Activated CD4-positive, alpha-beta T cell treated with anti-CD3 and anti-CD28 coated beads for 36 hours (primary cell): ENCODE measurements at regions of chr12 and their contacts with region 1.

Region 1: DNA sequence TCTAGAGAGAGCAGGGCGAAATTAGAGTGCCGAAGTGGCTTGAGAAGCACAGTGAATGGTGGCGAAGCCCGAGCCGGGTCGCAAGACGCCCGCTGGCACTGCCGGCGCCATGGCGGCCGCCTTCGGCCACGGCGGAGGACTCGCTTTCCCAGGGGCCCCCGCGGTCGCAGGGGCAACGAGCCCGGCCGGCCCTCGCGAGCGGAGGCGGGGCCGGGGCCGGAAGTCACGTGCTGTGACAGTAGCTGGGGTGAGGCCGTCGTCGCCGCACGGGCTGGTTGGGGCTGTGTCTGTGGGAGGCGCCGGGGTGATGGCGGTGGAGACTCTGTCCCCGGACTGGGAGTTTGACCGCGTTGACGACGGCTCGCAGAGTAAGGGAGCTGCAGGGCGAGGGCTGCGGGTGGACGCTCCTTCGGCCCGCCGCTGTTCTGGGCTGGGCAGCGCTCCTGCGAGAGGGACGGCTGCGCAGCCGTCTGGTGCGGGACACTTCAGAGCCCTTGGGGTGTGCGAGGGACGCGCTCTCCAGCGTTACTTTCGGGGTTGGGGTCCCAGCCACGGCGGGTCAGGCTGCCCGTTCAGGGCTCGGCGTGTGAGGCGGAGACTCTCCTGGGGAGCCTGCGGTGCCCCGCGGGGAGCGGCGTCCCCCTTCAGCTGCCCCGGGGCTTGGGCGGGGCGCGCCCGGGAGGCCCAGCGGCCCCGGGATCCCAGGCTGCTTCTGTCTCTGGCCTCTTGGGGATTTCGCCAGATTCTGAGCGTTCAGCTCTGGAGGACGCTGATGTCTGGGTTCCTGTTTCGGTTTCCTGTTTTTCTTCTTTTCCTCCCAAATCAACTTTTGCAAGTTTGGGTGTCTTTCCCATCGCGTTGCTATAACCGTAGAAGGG is at the start of gene WASHC4:
- DNase-seq: peak; percentile 97
- ATAC-seq: peak; percentile 96
- H3K4me3 Mint-ChIP-seq: peak within 1 kb of the TSS; percentile 93
- H3K27ac Mint-ChIP-seq: peak within 1 kb of the TSS; percentile 88
- H3K4me1 Mint-ChIP-seq: peaks cover 33% of the 10 kb centered on the region
- H3K27me3 Mint-ChIP-seq: peaks cover 13% of the 10 kb centered on the region
- total RNA-seq, gene WASHC4: 29.6 to 35.9 TPM

Region 2: GRCh38 chr12:103930034-103930786 is 1177.5 kb before region 1 on chr12 and contains the start of gene HSP90B1:
- CTCF ChIA-PET with region 1: no interaction called
- POLR2A ChIA-PET with region 1: no interaction called
- intact Hi-C with region 1: loop called in 1 of 2 experiments (anchors 2 kb)
- DNase-seq: peak; percentile 100
- ATAC-seq: peak; percentile 75
- H3K4me3 Mint-ChIP-seq: peak within 1 kb of the TSS; percentile 77
- H3K27ac Mint-ChIP-seq: peak within 1 kb of the TSS; percentile 100
- H3K4me1 Mint-ChIP-seq: peaks cover 54% of the 10 kb centered on the region
- H3K27me3 Mint-ChIP-seq: no peaks in the 10 kb centered on the region
- total RNA-seq, gene HSP90B1: 384 to 394 TPM

Region 3: DNA sequence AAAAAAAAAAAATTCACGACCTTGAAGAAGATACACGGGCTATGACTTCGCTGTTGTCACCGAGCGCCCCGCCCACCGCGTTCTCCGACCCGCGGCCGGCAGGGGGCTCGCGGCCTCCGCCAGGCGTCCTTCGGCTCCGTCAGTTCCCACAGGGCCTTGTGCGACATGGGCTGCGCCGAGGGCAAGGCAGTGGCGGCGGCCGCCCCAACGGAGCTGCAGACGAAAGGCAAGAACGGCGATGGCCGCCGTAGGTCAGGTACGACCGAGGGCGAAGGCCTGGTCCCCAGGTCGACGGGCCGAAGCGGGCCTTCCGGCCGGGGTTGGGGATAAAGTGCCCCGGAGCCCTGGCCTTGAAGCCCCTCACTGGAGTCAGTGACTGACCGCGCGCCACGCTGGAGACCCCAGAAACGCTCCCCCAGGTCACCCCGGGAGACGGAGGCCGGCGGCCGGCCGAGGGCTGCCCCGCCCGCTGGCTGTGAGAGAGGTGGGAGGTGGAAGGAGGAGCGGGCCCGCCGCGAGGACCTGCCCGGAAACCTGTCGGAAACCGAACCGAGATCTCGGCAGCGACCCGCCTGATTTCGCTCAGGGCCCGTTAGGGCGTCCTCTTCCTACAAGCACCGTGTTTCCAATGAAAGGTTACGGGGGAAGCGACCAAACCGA is 892.0 kb before region 1 on chr12 and contains the start of gene TXNRD1:
- CTCF ChIA-PET with region 1: no interaction called
- POLR2A ChIA-PET with region 1: no interaction called
- intact Hi-C with region 1: loop called (anchors 5 kb)
- DNase-seq: peak; percentile 92
- ATAC-seq: peak; percentile 79
- H3K4me3 Mint-ChIP-seq: peak within 1 kb of the TSS; percentile 71
- H3K27ac Mint-ChIP-seq: peak within 1 kb of the TSS; percentile 80
- H3K4me1 Mint-ChIP-seq: peaks cover 45% of the 10 kb centered on the region
- H3K27me3 Mint-ChIP-seq: peaks cover 2% of the 10 kb centered on the region
- total RNA-seq, gene TXNRD1: 66.7 to 88.0 TPM

Region 4: DNA sequence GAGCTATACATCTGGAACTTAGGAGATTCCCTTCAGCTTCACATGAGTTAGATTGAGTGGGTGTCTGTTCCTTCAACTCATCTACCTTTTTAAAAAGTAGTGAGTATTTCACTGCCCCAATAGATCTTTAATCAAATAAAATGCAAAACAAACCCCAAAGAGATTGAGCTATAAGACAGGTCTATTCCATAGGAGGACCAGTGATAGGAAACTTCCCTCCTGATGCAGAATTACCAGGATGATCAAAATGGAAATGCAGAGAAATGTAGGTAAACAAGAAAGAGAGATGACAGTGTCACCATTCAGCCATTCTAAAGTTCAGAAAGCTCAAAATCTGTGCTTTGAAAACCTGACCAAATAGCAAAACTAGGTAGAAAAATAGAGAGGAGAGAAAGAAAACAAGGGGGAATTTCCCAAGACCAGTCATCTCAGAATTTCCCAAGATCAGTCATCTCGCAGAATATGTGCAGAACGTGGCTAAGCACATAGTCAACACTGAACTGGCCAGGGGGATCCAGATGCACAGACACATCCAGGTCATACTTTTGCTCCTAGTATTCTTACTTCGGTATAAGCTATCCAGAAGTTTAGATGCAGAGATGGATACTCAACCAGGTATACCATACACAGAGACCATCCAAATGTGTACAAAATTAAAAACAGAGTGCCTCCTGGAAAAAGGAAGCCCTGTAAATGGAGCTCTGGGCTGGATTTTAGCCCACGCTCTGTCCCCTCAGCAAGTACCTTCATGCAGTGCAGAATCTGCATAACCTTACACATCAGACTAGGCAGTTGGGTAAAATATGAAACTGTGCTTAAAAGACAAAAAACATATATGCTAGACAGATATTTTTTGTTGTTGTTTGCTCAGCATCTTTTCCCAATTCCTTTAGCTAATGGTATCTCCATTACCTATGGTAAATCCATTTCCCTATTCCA is 177.1 kb before region 1 on chr12:
- CTCF ChIA-PET with region 1: no interaction called
- POLR2A ChIA-PET with region 1: no interaction called
- intact Hi-C with region 1: loop called in 1 of 2 experiments (anchors 1 kb)
- DNase-seq: peak; percentile 73
- ATAC-seq: peak; percentile 98
- H3K4me3 Mint-ChIP-seq: peak overlapping the region; percentile 30
- H3K27ac Mint-ChIP-seq: peak overlapping the region; percentile 77
- H3K4me1 Mint-ChIP-seq: peaks cover 29% of the 10 kb centered on the region
- H3K27me3 Mint-ChIP-seq: peaks cover 1% of the 10 kb centered on the region

Region 5: DNA sequence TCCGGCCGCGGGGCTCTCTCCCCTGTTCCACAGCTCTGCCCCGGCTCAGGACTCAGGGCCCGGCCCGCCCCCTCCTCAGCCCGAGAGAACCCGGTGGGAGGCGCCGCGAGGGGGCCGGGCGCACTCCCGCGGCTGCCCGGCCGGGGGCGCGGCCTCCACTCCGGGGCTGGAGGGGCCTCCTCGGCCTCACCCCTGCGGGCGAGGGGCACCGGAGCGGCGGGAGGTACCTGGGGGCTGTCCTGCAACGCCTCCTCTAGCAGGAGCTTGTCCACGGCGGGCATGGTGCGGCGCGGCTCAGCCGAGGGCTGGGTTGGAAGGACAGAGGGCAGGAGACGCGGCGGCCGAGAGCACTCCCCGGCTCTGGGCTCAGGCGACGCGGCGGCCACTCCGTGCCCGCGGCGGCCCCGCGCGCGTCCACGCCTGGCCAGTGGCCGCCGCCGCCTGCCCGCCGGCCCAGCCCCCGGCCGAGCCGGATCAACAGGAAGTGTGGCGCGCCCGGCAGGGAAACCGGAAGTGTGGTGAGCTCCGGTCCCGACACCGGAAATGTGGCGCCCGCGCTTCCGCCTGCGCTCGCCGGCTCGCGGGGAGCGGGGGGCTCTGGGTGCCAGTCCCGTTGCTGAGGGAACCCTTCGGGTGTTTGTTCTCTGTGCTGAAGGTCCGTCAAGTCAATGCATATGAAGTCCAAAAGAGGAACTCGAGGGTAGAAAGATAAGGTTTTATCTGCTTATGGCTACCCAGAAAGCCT is 128.2 kb after region 1 on chr12 and contains the start of gene APPL2:
- CTCF ChIA-PET with region 1: no interaction called
- POLR2A ChIA-PET with region 1: no interaction called
- intact Hi-C with region 1: loop called (anchors 1 to 2 kb)
- DNase-seq: peak; percentile 87
- ATAC-seq: peak; percentile 84
- H3K4me3 Mint-ChIP-seq: peak within 1 kb of the TSS; percentile 85
- H3K27ac Mint-ChIP-seq: peak within 1 kb of the TSS; percentile 86
- H3K4me1 Mint-ChIP-seq: peaks cover 41% of the 10 kb centered on the region
- H3K27me3 Mint-ChIP-seq: no peaks in the 10 kb centered on the region
- total RNA-seq, gene APPL2: 13.9 to 17.2 TPM

Region 6: GRCh38 chr12:105253882-105254513 is 146.3 kb after region 1 on chr12:
- CTCF ChIA-PET with region 1: no interaction called
- POLR2A ChIA-PET with region 1: no interaction called
- intact Hi-C with region 1: no loop called
- DNase-seq: no peak
- ATAC-seq: peak; percentile 70
- H3K4me3 Mint-ChIP-seq: no peak overlapping the region
- H3K27ac Mint-ChIP-seq: no peak overlapping the region
- H3K4me1 Mint-ChIP-seq: peaks cover 5% of the 10 kb centered on the region
- H3K27me3 Mint-ChIP-seq: no peaks in the 10 kb centered on the region

Region 7: DNA sequence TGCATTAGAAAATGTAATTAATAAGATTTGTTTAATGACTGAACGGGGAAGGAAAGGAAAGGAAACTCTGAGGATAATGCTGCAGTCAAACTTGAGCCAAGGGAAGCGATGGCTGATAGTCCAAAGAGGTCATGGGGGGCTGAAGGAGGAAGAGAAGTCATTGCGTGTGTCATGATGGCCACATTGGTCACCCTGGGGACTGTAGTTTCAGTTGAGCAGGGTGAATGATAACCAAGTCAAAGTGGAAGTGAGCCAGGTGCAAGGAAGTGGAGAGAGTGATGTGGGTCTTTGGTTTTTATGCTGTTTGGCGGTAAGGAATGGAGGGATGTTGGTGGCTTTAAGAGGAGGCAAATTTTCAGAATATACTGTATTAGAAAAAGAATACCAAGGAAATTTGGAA is 244.3 kb after region 1 on chr12:
- CTCF ChIA-PET with region 1: no interaction called
- POLR2A ChIA-PET with region 1: no interaction called
- intact Hi-C with region 1: no loop called
- DNase-seq: no peak
- ATAC-seq: no peak
- H3K4me3 Mint-ChIP-seq: no peak overlapping the region
- H3K27ac Mint-ChIP-seq: no peak overlapping the region
- H3K4me1 Mint-ChIP-seq: peaks cover 13% of the 10 kb centered on the region
- H3K27me3 Mint-ChIP-seq: no peaks in the 10 kb centered on the region

Region 8: GRCh38 chr12:106357549-106358395 is 1250.0 kb after region 1 on chr12 and contains the start of gene POLR3B:
- CTCF ChIA-PET with region 1: no interaction called
- POLR2A ChIA-PET with region 1: no interaction called
- intact Hi-C with region 1: loop called in 1 of 2 experiments (anchors 1 kb)
- DNase-seq: peak; percentile 98
- ATAC-seq: peak; percentile 95
- H3K4me3 Mint-ChIP-seq: peak within 1 kb of the TSS; percentile 92
- H3K27ac Mint-ChIP-seq: peak within 1 kb of the TSS; percentile 92
- H3K4me1 Mint-ChIP-seq: peaks cover 14% of the 10 kb centered on the region
- H3K27me3 Mint-ChIP-seq: no peaks in the 10 kb centered on the region
- total RNA-seq, gene POLR3B: 9.1 to 11.7 TPM